Right ventricle myocardium inferior (tissue), 1 donor: ENCODE measurements at regions of chr5 and their contacts with region 1.

Region 1: DNA sequence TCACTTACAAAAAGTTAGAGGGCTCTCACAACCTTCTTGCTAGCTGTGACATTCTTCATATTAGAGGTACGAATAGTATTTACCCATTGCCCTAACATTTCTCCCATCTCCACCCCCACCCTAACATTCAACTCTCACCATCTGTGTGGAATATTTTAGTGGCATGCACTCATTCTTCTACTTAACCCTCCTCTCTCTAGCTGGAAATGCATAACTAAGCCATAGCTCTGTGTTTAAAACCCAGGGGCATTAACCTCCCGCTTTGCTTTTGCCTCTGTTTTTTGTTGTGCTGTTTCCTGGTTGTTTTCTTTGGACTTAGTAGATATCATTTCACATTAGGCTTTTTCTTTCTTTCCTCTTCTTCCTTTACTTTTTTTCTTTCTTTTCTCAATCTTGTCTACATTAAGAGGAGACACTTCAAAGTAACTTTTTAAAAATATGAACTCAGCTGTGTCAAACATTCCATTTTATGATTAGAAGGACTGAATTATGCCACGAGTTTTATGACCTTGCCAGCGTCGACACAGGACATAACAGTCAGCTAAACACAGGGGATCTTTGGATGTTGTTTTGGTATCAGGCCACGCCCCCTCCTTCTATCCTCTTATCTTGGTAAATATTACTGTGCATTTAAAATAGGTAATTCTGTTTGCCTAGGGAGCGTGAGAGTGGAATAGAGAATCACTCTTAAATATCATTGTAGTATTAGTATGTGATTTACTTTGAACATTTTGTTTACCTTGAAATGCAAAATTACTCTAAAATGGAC is 236.0 kb downstream of the CD180 start:
- DNase-seq: no peak
- ATAC-seq: peak; percentile 14

Region 2: GRCh38 chr5:66828548-66829357 is 131.8 kb before region 1 on chr5:
- intact Hi-C with region 1: loop called (anchors 5 kb)
- DNase-seq: peak; percentile 79
- ATAC-seq: peak; percentile 94

Region 3: GRCh38 chr5:66891183-66891925 is 69.2 kb before region 1 on chr5:
- intact Hi-C with region 1: loop called (anchors 5 kb)
- DNase-seq: no peak
- ATAC-seq: peak; percentile 68

Region 4: GRCh38 chr5:67032921-67033664 is 72.5 kb after region 1 on chr5:
- intact Hi-C with region 1: loop called (anchors 5 kb)
- DNase-seq: no peak
- ATAC-seq: no peak